RWPE1 (cell line): ENCODE measurements at regions of chr5 and their contacts with region 1.

Region 1: GRCh38 chr5:148746826-148747535 is 79.4 kb upstream of the ADRB2 start:
- DNase-seq: no peak
- H3K27ac ChIP-seq: no peak overlapping the region
- CTCF ChIP-seq: no peak

Region 2: DNA sequence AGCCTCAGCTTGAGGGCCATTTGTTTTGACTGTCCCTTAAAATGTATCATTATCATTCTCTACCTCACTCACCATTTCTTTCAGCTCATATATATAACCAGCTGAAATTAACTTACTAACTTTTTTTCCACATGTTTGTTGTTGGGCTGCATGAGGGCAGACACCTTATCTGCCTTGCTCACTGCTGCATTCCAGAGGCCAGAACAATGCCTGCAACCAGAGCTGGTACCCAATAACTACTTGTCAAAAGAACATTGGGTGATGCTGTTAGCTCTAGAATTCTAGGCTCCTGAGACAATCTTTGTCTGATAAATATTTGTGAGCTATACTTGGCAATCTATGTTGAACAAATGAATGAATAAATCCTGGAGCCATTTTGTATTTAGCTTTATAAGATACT is 161.0 kb before region 1 on chr5:
- CTCF ChIA-PET with region 1: no interaction called
- POLR2A ChIA-PET with region 1: no interaction called
- DNase-seq: no peak
- H3K27ac ChIP-seq: no peak overlapping the region
- CTCF ChIP-seq: no peak

Region 3: DNA sequence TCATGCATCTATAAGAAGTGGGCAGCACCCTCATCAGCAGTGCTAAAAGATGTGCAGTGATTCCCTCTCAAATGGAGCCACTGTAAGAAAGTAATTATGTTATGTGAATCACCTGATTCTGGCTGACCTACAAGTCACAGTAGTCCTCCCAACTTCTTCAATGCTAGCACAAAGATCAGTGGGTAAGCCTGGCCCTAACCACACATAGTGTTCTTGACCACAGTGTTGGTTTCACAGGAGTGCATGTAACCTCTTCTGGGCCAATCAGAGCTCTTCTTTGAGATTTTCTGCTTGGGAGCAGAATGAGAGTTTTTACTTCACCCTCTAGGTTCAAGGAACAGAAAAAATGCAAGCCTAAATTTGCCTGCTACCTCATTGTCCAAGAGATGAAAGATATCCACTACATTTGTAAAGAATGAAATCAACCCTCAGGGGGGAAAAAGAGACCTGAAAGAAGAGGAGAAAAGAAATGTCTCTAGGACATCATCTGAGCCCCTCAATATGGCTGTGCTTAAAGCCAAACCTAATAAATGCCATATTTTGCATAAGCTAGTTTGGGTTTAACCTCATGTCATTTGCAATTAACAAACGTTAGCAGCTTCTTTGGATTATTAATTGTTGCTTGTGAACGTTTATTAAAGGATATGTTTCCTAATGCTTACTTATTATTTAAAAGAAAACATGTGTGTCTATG is 14.1 kb after region 1 on chr5:
- CTCF ChIA-PET with region 1: no interaction called
- POLR2A ChIA-PET with region 1: no interaction called
- DNase-seq: no peak
- H3K27ac ChIP-seq: no peak overlapping the region
- CTCF ChIP-seq: no peak

Region 4: DNA sequence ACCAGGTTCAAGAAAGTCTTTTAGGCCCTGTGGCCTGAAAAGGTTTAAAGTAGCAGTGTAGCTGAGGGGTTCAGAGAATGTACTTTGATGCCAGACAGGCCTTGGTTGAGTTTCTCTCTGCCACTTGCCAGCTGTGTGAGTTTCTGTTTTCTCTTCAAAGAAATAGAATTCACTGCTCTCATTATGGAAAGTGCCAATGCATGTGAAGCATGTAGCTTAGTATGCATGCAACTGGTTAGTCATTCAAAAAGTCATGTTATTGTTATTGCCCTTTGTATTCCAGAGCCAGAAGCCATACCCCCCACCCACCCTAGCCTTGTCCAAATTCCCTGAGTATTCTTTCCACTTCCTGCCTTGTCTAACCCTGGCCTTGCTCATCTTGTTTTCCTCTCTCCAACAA is 181.2 kb after region 1 on chr5:
- CTCF ChIA-PET with region 1: no interaction called
- POLR2A ChIA-PET with region 1: no interaction called
- DNase-seq: no peak
- H3K27ac ChIP-seq: no peak overlapping the region
- CTCF ChIP-seq: no peak

Region 5: GRCh38 chr5:149114403-149115312 is 367.7 kb after region 1 on chr5:
- CTCF ChIA-PET with region 1: interaction called, 11 read pairs
- POLR2A ChIA-PET with region 1: no interaction called
- DNase-seq: peak; percentile 75
- H3K27ac ChIP-seq: no peak overlapping the region; the same call in 1 of the 2 replicates
- CTCF ChIP-seq: peak; percentile 90